Common myeloid progenitor, CD34-positive (primary cell): ENCODE measurements at regions of chr11 and their contacts with region 1.

Region 1: GRCh38 chr11:14454861-14455632 is 44.6 kb downstream of the COPB1 start:
- DNase-seq: peak; percentile 32 to 59 (median 47)
- H3K4me3 ChIP-seq: no peak overlapping the region
- H3K27ac ChIP-seq: no peak overlapping the region
- H3K4me1 ChIP-seq: peaks cover 0 to 4% (median 0%) of the 10 kb centered on the region in 4 experiments
- H3K27me3 ChIP-seq: no peaks in the 10 kb centered on the region

Region 2: DNA sequence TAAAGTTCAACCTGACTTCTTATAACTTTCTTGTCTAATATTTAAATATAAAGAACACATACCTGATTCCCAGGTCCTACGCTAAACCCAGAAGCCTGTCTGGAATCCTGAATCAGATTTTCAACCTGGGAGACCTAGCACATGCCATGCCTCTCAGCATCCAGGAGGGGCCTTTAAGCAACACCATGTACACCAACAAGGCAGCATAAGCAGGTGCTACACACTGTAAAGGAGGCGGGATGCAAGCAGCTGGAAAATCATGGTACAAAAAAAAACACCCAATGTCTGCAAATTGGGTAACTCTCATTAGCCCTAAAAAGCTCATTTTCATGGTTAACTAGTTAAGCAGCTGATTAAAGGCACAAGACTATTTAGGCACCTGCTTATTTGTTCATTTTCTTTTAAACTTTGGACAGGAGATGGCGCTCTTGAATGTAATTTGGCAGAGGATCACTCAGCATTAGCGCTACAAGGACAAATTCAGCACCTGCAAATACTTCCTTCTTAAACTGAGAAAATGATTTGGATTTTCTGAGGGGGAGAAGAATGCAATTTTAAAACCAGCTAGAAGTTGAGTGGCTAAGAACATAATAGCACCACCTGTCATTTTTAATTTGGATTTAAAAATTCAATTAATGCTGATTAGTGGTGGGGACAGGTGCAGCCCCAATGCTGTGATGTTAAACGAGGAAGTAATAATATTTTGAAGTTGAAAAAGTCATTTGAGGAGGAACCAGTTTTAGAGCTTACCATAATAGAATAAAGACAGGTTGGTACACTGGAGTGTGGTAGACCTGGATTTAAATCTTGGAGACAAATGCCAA is 682.6 kb before region 1 on chr11:
- CTCF ChIA-PET with region 1: interaction called, 14 read pairs
- POLR2A ChIA-PET with region 1: no interaction called
- DNase-seq: peak; percentile 84 to 92 (median 90)
- H3K4me3 ChIP-seq: no peak overlapping the region
- H3K27ac ChIP-seq: no peak overlapping the region
- H3K4me1 ChIP-seq: no peaks in the 10 kb centered on the region
- H3K27me3 ChIP-seq: peaks cover 0 to 10% (median 2%) of the 10 kb centered on the region in 5 experiments

Region 3: DNA sequence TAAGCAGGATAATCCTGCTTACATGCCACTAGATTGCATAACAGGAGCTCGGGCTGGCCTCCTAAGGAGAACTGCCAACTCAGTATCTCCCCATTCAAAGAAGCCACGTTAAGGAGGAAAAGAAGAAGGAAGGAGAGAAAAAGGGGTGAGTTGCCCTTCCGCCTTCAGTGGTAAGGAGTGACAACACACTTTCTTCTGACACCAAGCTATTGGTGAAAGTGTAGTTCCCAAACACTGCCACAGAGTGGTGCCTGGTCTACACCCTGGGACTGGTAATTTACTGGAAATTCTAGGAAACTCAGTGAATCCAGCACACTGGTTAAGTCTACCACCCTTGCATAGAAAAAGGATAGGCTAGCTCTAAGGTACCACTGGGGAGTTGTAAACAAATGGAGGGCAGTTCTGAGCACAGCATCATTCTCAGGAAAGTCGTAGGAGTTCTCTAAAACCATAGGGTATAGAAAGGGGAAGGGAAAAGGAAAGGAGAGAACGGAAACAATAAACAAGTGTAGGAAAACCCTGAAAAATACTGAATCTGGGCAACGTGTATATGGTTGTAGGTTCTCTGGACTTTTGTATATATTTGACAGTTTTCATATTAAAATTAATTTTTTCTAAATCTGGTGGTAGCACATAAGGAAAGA is 154.3 kb before region 1 on chr11:
- CTCF ChIA-PET with region 1: interaction called, 179 read pairs
- POLR2A ChIA-PET with region 1: interaction called, 3 read pairs
- DNase-seq: peak; percentile 54 to 85 (median 84)
- H3K4me3 ChIP-seq: no peak overlapping the region
- H3K27ac ChIP-seq: no peak overlapping the region
- H3K4me1 ChIP-seq: peaks cover 0 to 8% (median 1%) of the 10 kb centered on the region in 4 experiments
- H3K27me3 ChIP-seq: peaks cover 0 to 24% (median 5%) of the 10 kb centered on the region in 5 experiments

Region 4: GRCh38 chr11:14312736-14313438 is 142.2 kb before region 1 on chr11:
- CTCF ChIA-PET with region 1: interaction called, 179 read pairs
- POLR2A ChIA-PET with region 1: no interaction called
- DNase-seq: no peak
- H3K4me3 ChIP-seq: no peak overlapping the region
- H3K27ac ChIP-seq: no peak overlapping the region
- H3K4me1 ChIP-seq: peaks cover 0 to 9% (median 4%) of the 10 kb centered on the region in 4 experiments
- H3K27me3 ChIP-seq: peaks cover 0 to 21% (median 0%) of the 10 kb centered on the region in 5 experiments

Region 5: DNA sequence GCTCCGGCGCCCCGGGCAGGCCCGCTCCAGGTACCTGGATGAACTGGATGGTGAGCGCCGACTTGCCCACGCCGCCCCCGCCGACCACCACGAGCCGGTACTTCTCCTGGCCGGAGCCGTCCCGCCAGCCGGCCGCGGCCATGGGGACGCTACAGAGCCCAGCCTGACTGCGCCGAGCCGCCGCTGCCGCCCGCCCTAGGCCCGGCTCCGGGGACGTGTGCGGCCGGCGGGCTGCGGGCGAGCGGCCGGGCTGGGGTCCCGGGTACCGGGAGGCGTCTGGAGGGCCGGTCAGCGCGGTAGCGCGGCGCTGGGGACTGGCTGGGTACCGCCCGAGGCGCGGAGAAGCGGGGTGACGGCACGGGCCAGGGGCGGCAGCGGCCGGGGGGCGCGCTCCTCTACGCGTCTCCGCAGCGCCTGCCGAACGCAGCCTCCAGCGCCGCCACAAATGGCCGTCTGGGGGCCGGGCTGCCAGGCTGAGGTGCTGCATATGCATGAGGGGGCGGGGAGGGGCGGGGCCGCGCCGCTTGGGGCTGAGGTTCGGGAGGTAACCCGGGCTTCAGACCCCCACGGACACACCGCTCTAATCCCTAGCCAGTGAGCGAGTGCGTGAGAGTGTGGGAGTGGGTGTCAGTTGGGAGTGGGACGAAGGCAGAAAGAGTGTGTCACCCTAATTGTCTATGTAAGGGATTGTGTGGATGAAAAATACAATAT is 96.2 kb before region 1 on chr11 and contains the start of gene RRAS2:
- CTCF ChIA-PET with region 1: interaction called, 10 read pairs
- POLR2A ChIA-PET with region 1: no interaction called
- DNase-seq: peak; percentile 69 to 84 (median 76)
- H3K4me3 ChIP-seq: peak within 1 kb of the TSS; percentile 52 to 78 (median 73)
- H3K27ac ChIP-seq: peak within 1 kb of the TSS in 1 of 2 experiments; percentile 58
- H3K4me1 ChIP-seq: peaks cover 0 to 12% (median 10%) of the 10 kb centered on the region in 4 experiments
- H3K27me3 ChIP-seq: peaks cover 0 to 50% (median 28%) of the 10 kb centered on the region in 5 experiments

Region 6: GRCh38 chr11:14471127-14471526 is 16.1 kb after region 1 on chr11:
- CTCF ChIA-PET with region 1: interaction called, 34 read pairs
- POLR2A ChIA-PET with region 1: no interaction called
- DNase-seq: no peak
- H3K4me3 ChIP-seq: no peak overlapping the region
- H3K27ac ChIP-seq: no peak overlapping the region
- H3K4me1 ChIP-seq: no peaks in the 10 kb centered on the region
- H3K27me3 ChIP-seq: no peaks in the 10 kb centered on the region